GM12878 (cell line): ENCODE measurements at regions of chr11 and their contacts with region 1.

Region 1: DNA sequence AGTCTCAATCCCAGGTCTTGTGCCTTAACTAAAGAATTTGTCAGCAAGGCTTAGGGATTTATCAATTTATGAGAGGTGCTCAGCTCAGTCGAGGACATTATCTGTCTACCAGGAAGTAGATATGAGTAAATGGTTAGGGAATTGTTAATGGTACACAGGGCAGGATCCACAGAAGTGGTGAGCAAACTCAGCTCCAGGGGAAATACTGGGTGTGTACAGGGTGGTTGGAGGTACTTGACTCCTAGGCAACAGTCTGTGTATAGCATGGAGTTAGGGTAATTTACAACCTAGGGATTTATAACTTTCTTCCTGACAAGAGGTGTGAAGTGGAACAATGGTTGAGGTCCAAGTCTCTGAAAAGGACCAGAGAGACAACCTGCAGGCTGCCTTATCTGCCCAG is 123.4 kb upstream of the OR9Q1 start:
- DNase-seq: no peak
- ATAC-seq: no peak
- H3K4me3 ChIP-seq: no peak overlapping the region
- H3K27ac ChIP-seq: no peak overlapping the region
- H3K4me1 ChIP-seq: no peaks in the 10 kb centered on the region
- H3K27me3 ChIP-seq: no peaks in the 10 kb centered on the region; a peak in 1 of 4 replicates
- CTCF ChIP-seq: no peak
- EP300 ChIP-seq: no peak
- POLR2A ChIP-seq: no peak
- RAD21 ChIP-seq: no peak

Region 2: GRCh38 chr11:57885298-57886050 is 14.8 kb before region 1 on chr11:
- CTCF ChIA-PET with region 1: no interaction called
- POLR2A ChIA-PET with region 1: no interaction called
- RAD21 ChIA-PET with region 1: no interaction called
- SMC1A ChIA-PET with region 1: no interaction called
- in situ Hi-C with region 1: no loop called
- intact Hi-C with region 1: loop called (anchors 1 kb)
- DNase-seq: no peak
- ATAC-seq: no peak
- H3K4me3 ChIP-seq: no peak overlapping the region
- H3K27ac ChIP-seq: no peak overlapping the region
- H3K4me1 ChIP-seq: no peaks in the 10 kb centered on the region
- H3K27me3 ChIP-seq: no peaks in the 10 kb centered on the region
- CTCF ChIP-seq: no peak
- EP300 ChIP-seq: no peak
- POLR2A ChIP-seq: no peak
- RAD21 ChIP-seq: no peak

Region 3: GRCh38 chr11:57917632-57918031 is 17.3 kb after region 1 on chr11:
- CTCF ChIA-PET with region 1: no interaction called
- POLR2A ChIA-PET with region 1: no interaction called
- RAD21 ChIA-PET with region 1: no interaction called
- SMC1A ChIA-PET with region 1: interaction called, 3 read pairs
- in situ Hi-C with region 1: no loop called
- intact Hi-C with region 1: loop called (anchors 2 kb)
- DNase-seq: no peak
- ATAC-seq: no peak
- H3K4me3 ChIP-seq: no peak overlapping the region
- H3K27ac ChIP-seq: no peak overlapping the region
- H3K4me1 ChIP-seq: no peaks in the 10 kb centered on the region
- H3K27me3 ChIP-seq: no peaks in the 10 kb centered on the region
- CTCF ChIP-seq: no peak
- EP300 ChIP-seq: no peak
- POLR2A ChIP-seq: no peak
- RAD21 ChIP-seq: no peak